ENCODE measurements at regions of chr17 and their contacts with region 1.

Region 1: DNA sequence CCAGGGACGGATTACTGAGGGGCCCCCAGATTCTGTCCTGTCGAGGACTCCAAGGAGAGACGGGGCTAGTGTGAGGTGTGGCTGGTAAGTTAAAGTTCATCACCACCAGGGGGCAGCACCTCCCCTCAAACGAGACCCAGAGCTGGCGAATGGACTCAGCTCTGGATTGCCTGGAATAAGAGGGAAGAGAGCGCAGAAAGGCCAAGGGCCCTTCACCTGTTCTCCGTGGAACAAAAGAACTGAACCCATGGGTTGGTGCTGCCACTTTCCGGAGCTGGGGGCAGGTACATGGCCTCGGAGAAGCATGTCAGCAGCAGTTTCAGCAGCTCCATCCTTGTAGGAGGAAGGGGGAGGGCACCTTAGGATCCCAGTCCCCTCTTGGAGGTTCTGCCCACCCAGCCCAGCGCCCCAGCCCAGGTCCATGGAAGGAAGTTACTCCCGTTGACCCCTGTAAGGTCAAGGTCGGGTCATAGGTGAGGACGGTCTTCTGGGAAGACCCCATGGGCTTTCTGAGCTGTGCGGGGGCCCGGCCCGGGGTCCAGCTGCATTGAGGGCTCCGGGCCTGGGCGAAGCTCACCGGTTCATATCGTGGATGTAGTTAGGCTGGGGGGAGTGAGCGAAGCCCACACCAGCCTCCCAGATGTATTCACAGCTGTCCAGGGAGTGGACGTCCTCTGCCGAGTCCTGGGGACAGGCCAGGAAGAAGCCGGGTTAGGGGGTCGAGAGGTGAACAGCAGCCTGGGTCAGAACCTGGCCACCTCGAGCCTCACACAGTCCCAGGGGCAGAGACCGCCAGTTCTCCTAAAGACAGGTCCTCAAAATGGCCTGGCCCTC is 10.7 kb downstream of the HID1 start:
- DNase-seq: peak; percentile 89
- H3K4me3 Mint-ChIP-seq: no peak overlapping the region
- H3K27ac Mint-ChIP-seq: no peak overlapping the region
- H3K4me1 Mint-ChIP-seq: peaks cover 21% of the 10 kb centered on the region
- H3K27me3 Mint-ChIP-seq: no peaks in the 10 kb centered on the region
- CTCF ChIP-seq: peak; percentile 67

Region 2: GRCh38 chr17:74748529-74749365 is 213.1 kb before region 1 on chr17 and contains the start of gene NHERF1:
- CTCF ChIA-PET with region 1: interaction called, 4 read pairs
- POLR2A ChIA-PET with region 1: interaction called, 3 read pairs
- intact Hi-C with region 1: loop called (anchors 2 kb)
- DNase-seq: peak; percentile 94
- H3K4me3 Mint-ChIP-seq: peak within 1 kb of the TSS; percentile 88
- H3K27ac Mint-ChIP-seq: peak within 1 kb of the TSS; percentile 57
- H3K4me1 Mint-ChIP-seq: peaks cover 34% of the 10 kb centered on the region
- H3K27me3 Mint-ChIP-seq: no peaks in the 10 kb centered on the region
- CTCF ChIP-seq: no peak
- total RNA-seq, gene NHERF1: 23.9 and 25.3 TPM in 2 replicates

Region 3: GRCh38 chr17:74945543-74945942 is 16.3 kb before region 1 on chr17:
- CTCF ChIA-PET with region 1: interaction called, 16 read pairs
- POLR2A ChIA-PET with region 1: interaction called, 6 read pairs
- intact Hi-C with region 1: no loop called
- DNase-seq: no peak
- H3K4me3 Mint-ChIP-seq: no peak overlapping the region
- H3K27ac Mint-ChIP-seq: peak overlapping the region; percentile 83
- H3K4me1 Mint-ChIP-seq: peaks cover 20% of the 10 kb centered on the region
- H3K27me3 Mint-ChIP-seq: no peaks in the 10 kb centered on the region
- CTCF ChIP-seq: no peak

Region 4: DNA sequence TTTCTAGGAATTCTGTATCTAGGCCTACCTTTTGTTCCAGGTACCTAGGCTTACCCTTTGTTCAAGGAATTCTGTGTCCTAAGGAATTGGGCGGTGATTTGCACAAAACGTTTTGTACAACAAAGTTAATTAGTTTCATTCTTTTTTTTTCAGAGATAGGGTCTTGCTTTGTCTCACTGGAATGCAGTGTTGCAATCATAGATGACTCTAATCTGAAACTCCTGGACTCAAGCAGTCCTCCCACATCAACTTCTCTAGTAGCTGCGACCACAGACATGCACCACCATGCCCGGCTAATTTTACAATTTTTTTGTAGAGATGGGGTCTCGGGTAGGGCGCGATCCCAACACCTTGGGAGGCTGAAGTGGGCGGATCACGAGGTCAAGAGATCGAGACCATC is 32.6 kb after region 1 on chr17:
- CTCF ChIA-PET with region 1: interaction called, 20 read pairs
- POLR2A ChIA-PET with region 1: interaction called, 17 read pairs
- intact Hi-C with region 1: no loop called
- DNase-seq: peak; percentile 43
- H3K4me3 Mint-ChIP-seq: no peak overlapping the region
- H3K27ac Mint-ChIP-seq: no peak overlapping the region
- H3K4me1 Mint-ChIP-seq: peaks cover 25% of the 10 kb centered on the region
- H3K27me3 Mint-ChIP-seq: no peaks in the 10 kb centered on the region
- CTCF ChIP-seq: no peak

Region 5: DNA sequence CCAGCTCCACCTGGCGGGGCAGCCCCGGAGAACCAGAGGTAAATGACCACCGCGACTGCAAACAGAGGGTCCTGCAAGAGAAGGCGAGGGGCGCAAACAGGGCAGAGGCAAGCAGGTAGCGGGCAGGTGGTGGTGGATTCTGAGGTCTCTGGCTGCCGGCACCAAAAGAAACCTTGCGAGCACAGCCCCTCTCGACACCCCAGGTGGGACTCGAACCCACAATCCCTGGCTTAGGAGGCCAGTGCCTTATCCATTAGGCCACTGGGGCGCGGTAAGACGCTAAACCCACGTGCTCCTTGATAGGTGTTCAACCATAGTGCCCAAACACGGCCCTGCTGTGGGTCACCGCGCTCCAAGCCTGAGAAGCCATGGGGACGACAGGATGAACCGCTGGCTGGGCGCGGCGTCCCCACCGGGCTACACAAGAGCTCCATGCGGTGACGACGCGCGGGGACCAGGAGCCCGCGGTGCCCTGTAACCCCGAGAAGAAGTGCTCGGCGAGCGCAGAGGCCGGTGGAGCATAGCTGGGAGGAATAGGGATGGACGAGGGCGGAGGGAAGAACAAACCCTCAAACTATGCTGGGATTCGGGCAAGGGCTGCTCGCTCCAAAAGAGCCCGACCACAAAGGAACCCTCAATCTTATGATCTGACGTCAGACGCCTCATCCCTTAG is 72.5 kb after region 1 on chr17:
- CTCF ChIA-PET with region 1: interaction called, 7 read pairs
- POLR2A ChIA-PET with region 1: interaction called, 13 read pairs
- intact Hi-C with region 1: loop called (anchors 1 kb)
- DNase-seq: peak; percentile 96
- H3K4me3 Mint-ChIP-seq: peak overlapping the region; percentile 81
- H3K27ac Mint-ChIP-seq: peak overlapping the region; percentile 94
- H3K4me1 Mint-ChIP-seq: peaks cover 12% of the 10 kb centered on the region
- H3K27me3 Mint-ChIP-seq: no peaks in the 10 kb centered on the region
- CTCF ChIP-seq: no peak

Region 6: GRCh38 chr17:75205037-75205792 is 243.3 kb after region 1 on chr17 and contains the start of gene NUP85:
- CTCF ChIA-PET with region 1: interaction called, 47 read pairs
- POLR2A ChIA-PET with region 1: interaction called, 5 read pairs
- intact Hi-C with region 1: loop called (anchors 1 kb)
- DNase-seq: peak; percentile 94
- H3K4me3 Mint-ChIP-seq: peak within 1 kb of the TSS; percentile 78
- H3K27ac Mint-ChIP-seq: peak within 1 kb of the TSS; percentile 98
- H3K4me1 Mint-ChIP-seq: peaks cover 11% of the 10 kb centered on the region
- H3K27me3 Mint-ChIP-seq: no peaks in the 10 kb centered on the region
- CTCF ChIP-seq: no peak
- total RNA-seq, gene NUP85: 42.3 and 49.2 TPM in 2 replicates